ENCODE measurements at regions of chr2 and their contacts with region 1.

Region 1: GRCh38 chr2:152367547-152368390 is 32.8 kb downstream of the FMNL2 start:
- DNase-seq: peak; percentile 33
- ATAC-seq: peak; percentile 95
- H3K4me3 ChIP-seq: no peak overlapping the region
- H3K27ac ChIP-seq: no peak overlapping the region; the same call in 1 of the 2 replicates
- H3K4me1 ChIP-seq: peaks cover 9% of the 10 kb centered on the region
- H3K27me3 ChIP-seq: no peaks in the 10 kb centered on the region
- CTCF ChIP-seq: no peak
- EP300 ChIP-seq: peak in 1 of 2 experiments; percentile 65; a peak in 1 of 4 replicates
- POLR2A ChIP-seq: no peak
- RAD21 ChIP-seq: no peak

Region 2: DNA sequence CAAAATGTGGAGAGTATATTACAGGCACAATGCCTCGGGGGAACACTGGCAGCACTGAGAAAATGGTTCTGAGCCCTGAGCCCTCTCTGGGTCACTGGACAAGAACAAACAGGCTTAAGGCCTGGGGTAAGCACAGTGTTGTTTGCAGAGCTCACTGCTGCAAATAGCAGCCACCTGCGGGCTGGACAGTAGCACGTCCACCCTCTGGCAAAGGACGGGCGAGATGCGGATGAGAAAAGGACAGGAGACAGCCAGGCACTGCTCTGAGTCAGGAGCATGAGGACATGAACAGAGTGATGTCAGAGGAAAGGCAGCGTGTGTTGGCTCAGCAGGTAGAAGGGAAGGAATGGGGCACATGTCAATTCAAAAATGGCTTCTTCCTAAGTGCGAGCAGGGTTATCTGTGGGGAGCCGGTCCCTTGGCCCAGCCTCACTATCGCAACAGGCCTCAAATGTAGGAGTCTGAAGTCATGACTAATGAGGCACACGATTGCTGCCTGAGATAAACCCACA is 607.6 kb before region 1 on chr2:
- CTCF ChIA-PET with region 1: no interaction called
- POLR2A ChIA-PET with region 1: no interaction called
- RAD21 ChIA-PET with region 1: no interaction called
- SMC1A ChIA-PET with region 1: no interaction called
- in situ Hi-C with region 1: no loop called
- intact Hi-C with region 1: no loop called
- DNase-seq: no peak
- ATAC-seq: no peak
- H3K4me3 ChIP-seq: no peak overlapping the region
- H3K27ac ChIP-seq: no peak overlapping the region
- H3K4me1 ChIP-seq: no peaks in the 10 kb centered on the region
- H3K27me3 ChIP-seq: no peaks in the 10 kb centered on the region
- CTCF ChIP-seq: no peak
- EP300 ChIP-seq: no peak
- POLR2A ChIP-seq: no peak
- RAD21 ChIP-seq: no peak

Region 3: DNA sequence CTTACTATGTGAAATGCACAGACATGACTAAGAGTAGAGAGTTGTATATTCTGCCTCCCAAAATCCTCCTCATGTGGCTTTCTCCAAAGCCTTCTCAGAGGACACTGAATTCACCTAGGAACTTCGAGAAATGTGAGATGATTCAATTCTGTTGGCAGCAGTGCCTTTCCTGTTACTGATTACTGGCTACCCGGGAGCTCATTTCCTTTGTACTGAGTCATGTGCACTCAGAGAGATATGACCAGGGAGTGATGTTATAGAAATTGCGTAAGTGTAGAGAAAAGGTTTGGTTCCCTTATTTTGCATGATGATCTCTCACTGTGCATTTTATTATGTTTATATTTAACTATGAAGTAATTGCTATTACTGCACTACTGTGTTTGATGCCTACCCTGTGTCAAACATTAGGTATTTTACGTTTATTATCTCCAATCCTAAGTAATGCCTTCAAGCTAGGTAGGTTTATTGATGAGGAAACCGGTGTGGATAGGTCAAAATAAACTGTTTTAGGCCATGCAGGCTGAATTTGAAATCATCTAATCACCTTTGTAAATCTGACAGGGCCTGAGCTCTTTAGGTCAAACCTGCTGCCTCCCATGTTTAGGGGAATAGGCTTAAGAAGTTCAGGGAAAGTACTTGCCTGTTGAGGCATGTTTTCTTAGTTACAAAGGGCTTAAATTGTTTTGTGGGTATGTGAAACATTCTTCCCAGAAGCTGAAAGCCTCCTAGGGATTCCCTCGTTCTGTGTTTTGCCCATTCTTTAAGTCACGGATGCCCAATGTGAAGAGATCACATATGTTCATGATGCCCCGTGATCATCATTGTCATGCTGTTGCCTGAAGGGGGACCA is 54.0 kb after region 1 on chr2:
- CTCF ChIA-PET with region 1: interaction called, 3 read pairs
- POLR2A ChIA-PET with region 1: no interaction called
- RAD21 ChIA-PET with region 1: interaction called, 3 read pairs
- SMC1A ChIA-PET with region 1: no interaction called
- in situ Hi-C with region 1: no loop called
- intact Hi-C with region 1: loop called (anchors 5 kb)
- DNase-seq: no peak
- ATAC-seq: peak; percentile 86
- H3K4me3 ChIP-seq: no peak overlapping the region
- H3K27ac ChIP-seq: no peak overlapping the region
- H3K4me1 ChIP-seq: no peaks in the 10 kb centered on the region; the same call in 1 of the 2 replicates
- H3K27me3 ChIP-seq: no peaks in the 10 kb centered on the region
- CTCF ChIP-seq: no peak
- EP300 ChIP-seq: 0 out of 4 replicates have a peak, but pooled peaks of 1 of the 2 experiments have one; percentile 22
- POLR2A ChIP-seq: no peak
- RAD21 ChIP-seq: no peak

Region 4: DNA sequence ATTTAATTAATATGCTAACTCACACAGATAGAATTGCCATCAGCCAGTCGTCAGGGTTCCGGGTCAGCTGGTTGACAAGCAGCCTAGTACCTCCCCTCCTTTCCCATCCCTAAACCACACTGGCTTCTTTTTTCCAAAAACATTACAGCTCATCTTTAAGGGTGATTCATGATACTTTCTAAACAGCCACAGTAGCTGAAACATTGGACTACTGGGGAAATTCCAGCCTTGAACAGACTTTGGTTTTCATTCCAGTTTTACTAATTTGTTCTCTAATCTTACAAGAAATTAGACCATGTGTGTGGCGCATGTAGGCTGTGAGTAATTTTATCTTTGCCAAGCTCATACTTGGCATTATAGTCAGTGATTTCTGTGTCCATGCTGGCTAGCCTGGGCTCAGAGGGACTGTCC is 78.0 kb after region 1 on chr2:
- CTCF ChIA-PET with region 1: no interaction called
- POLR2A ChIA-PET with region 1: no interaction called
- RAD21 ChIA-PET with region 1: no interaction called
- SMC1A ChIA-PET with region 1: no interaction called
- in situ Hi-C with region 1: no loop called
- intact Hi-C with region 1: no loop called
- DNase-seq: no peak
- ATAC-seq: peak; percentile 86
- H3K4me3 ChIP-seq: no peak overlapping the region
- H3K27ac ChIP-seq: peak overlapping the region; percentile 33
- H3K4me1 ChIP-seq: no peaks in the 10 kb centered on the region; the same call in 1 of the 2 replicates
- H3K27me3 ChIP-seq: no peaks in the 10 kb centered on the region
- CTCF ChIP-seq: no peak
- EP300 ChIP-seq: no peak
- POLR2A ChIP-seq: no peak
- RAD21 ChIP-seq: no peak

Region 5: DNA sequence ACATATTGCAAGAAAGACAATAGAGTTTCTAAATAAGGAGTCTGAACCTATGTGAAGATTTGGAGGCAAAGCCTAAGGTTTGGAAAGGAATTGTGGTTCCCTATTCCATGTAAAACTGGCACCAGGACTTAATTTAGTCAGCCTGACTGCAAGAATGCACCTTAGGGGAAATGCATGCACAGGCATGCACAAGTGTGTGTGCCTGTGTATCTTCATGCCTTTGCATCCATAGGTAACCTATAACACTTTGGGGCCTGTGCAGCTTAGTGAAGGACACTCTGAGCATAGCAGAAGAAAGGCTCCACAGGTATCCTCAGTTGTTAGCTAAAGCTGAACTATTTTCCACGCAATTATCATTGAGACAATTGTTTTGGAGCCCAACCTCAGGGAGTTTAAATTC is 1037.4 kb after region 1 on chr2:
- CTCF ChIA-PET with region 1: no interaction called
- POLR2A ChIA-PET with region 1: no interaction called
- RAD21 ChIA-PET with region 1: no interaction called
- SMC1A ChIA-PET with region 1: no interaction called
- in situ Hi-C with region 1: no loop called
- intact Hi-C with region 1: no loop called
- DNase-seq: no peak
- ATAC-seq: no peak
- H3K4me3 ChIP-seq: no peak overlapping the region
- H3K27ac ChIP-seq: no peak overlapping the region
- H3K4me1 ChIP-seq: no peaks in the 10 kb centered on the region
- H3K27me3 ChIP-seq: no peaks in the 10 kb centered on the region
- CTCF ChIP-seq: no peak
- EP300 ChIP-seq: no peak
- POLR2A ChIP-seq: no peak
- RAD21 ChIP-seq: no peak